K562 (cell line): ENCODE measurements at regions of chr6 and their contacts with region 1.

Region 1: GRCh38 chr6:35468181-35468979 is at the start of gene RPL10A:
- DNase-seq: peak; percentile 94 to 99 (median 96)
- ATAC-seq: peak; percentile 88
- H3K4me3 ChIP-seq: peak within 1 kb of the TSS; percentile 91
- H3K27ac ChIP-seq: peak within 1 kb of the TSS; percentile 93
- H3K4me1 ChIP-seq: peaks cover 23 to 24% of the 10 kb centered on the region in 2 experiments; a peak in 4 of 5 replicates
- H3K27me3 ChIP-seq: no peaks in the 10 kb centered on the region; a peak in 1 of 5 replicates
- CTCF ChIP-seq: peak; percentile 97 to 99 (median 99)
- EP300 ChIP-seq: 0 out of 2 replicates have a peak, but pooled peaks have one; percentile 12
- POLR2A ChIP-seq: peak; percentile 100
- RAD21 ChIP-seq: peak; percentile 91 to 93
- polyA plus RNA-seq, gene RPL10A: 1,589 to 2,116 TPM

Region 2: DNA sequence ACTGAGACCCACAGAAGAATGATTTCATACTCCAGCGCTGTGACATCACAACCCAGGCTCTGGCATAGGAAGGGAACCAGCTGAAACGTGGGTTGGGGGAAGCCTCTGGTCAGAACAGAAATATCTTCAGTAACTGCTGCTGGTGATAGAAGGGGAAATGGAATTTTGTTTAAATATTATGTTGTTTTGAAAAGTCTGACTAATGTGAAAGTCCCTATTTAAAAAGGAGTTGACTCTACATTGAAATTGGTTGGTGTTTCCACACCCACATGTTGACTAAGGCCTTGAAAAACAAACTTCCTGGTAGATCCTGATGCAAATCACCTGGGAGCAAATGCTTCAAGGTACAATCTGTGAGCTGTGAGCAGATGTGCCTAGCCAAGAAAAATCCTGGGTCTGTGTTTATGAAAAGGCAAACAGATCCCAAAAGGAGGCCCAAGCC is 302.7 kb before region 1 on chr6:
- CTCF ChIA-PET with region 1: no interaction called
- POLR2A ChIA-PET with region 1: no interaction called
- in situ Hi-C with region 1: no loop called
- intact Hi-C with region 1: no loop called
- DNase-seq: no peak
- ATAC-seq: no peak
- H3K4me3 ChIP-seq: no peak overlapping the region
- H3K27ac ChIP-seq: no peak overlapping the region
- H3K4me1 ChIP-seq: no peaks in the 10 kb centered on the region
- H3K27me3 ChIP-seq: peaks cover 25 to 45% of the 10 kb centered on the region in 2 experiments; a peak in 4 of 5 replicates
- CTCF ChIP-seq: no peak
- EP300 ChIP-seq: no peak
- POLR2A ChIP-seq: no peak
- RAD21 ChIP-seq: no peak

Region 3: DNA sequence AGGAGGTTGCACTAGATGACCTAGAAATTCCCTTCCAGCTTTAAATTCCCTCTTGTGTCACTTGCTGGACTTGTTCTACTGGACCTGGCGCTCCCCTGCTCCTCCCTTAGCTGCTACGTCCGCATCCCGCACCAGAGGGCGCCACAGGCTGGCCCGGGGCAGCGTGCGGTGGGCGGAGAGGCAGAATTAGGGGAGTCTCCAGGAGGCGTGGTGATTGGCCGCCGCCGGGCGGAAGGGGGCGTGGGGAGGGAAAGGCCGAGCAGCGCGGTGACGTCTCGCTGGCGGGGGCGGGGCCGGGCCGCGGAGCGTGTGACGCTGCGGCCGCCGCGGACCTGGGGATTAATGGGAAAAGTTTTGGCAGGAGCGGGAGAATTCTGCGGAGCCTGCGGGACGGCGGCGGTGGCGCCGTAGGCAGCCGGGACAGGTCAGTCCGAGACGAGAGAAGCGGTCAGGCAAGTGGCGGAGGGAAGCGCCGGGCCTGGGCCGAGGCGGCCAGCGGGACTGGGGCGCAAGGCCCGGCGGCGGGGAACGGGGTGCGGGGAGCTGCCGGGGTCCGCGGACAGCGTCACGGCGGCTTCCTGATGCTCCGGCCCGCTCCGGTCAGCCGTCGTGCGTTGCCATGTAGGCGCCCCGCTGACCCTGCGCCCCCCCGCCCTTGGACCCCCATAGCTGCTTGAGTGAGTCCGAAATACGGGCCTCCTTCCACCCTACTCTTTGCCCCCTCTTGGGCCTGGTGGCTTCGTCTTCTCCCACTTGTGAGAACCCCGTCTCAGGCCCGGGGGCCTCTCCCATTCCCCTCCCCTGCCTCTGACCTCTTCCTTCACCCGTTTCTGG is 125.9 kb before region 1 on chr6 and contains the start of gene PPARD:
- CTCF ChIA-PET with region 1: interaction called, 17 read pairs
- POLR2A ChIA-PET with region 1: interaction called, 9 read pairs
- in situ Hi-C with region 1: loop called (anchors 5 kb)
- intact Hi-C with region 1: loop called (anchors 1 kb)
- DNase-seq: peak; percentile 99 to 100 (median 100)
- ATAC-seq: peak; percentile 97
- H3K4me3 ChIP-seq: peak within 1 kb of the TSS; percentile 73
- H3K27ac ChIP-seq: peak within 1 kb of the TSS; percentile 72
- H3K4me1 ChIP-seq: peaks cover 26 to 28% of the 10 kb centered on the region in 2 experiments; a peak in 4 of 5 replicates
- H3K27me3 ChIP-seq: peaks cover 0 to 6% of the 10 kb centered on the region in 2 experiments; a peak in 2 of 5 replicates
- CTCF ChIP-seq: peak; percentile 98 to 99 (median 99)
- EP300 ChIP-seq: peak; percentile 16; the same call in 1 of the 2 replicates
- POLR2A ChIP-seq: peak; percentile 65; the same call in 1 of the 2 replicates
- RAD21 ChIP-seq: peak; percentile 100
- polyA plus RNA-seq, gene PPARD: 0.14 to 0.18 TPM

Region 4: DNA sequence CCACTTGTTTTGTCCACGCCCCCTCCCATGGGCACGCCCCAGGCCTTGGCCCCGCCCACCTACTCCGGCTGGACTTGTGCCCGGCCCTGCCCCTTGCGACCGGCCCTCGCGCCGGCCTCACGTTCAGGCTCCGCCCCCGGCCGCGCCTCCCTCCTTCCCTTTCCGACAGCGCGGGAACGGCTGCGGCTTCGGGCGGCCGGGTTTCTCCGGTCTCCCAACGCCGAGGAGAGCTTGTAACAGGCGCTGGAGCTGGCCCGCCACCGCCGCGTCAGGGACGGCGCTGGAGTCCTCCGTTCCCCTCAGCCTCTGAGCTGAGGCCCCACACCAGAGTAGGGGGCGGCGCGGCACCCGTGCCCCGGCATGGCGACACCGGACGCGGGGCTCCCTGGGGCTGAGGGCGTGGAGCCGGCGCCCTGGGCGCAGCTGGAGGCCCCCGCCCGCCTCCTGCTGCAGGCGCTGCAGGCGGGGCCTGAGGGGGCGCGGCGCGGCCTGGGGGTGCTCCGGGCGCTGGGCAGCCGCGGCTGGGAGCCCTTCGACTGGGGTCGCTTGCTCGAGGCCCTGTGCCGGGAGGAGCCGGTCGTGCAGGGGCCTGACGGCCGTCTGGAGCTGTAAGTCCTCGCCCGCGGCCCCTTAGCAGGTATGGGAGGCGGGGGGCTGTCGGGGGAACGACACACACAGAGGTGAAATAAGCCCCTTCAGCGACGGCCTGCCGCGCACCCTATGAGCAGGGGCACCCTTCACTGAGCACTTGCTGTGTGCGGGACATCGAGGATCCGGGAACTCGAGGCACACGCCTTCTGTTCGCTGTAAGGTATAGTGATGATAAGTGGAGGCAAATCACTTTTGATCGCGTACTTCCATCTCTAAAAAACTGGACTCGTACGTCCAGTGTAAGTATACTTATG is 15.9 kb before region 1 on chr6 and contains the start of gene FANCE:
- CTCF ChIA-PET with region 1: no interaction called
- POLR2A ChIA-PET with region 1: interaction called, 31 read pairs
- in situ Hi-C with region 1: no loop called
- intact Hi-C with region 1: loop called (anchors 1 kb)
- DNase-seq: peak; percentile 98 to 99 (median 99)
- ATAC-seq: peak; percentile 94
- H3K4me3 ChIP-seq: peak within 1 kb of the TSS; percentile 73
- H3K27ac ChIP-seq: peak within 1 kb of the TSS; percentile 78
- H3K4me1 ChIP-seq: peaks cover 18 to 27% of the 10 kb centered on the region in 2 experiments
- H3K27me3 ChIP-seq: peaks cover 1 to 5% of the 10 kb centered on the region in 2 experiments; a peak in 1 of 5 replicates
- CTCF ChIP-seq: no peak; a peak in 1 of 6 replicates
- EP300 ChIP-seq: no peak
- POLR2A ChIP-seq: peak; percentile 92
- RAD21 ChIP-seq: no peak
- polyA plus RNA-seq, gene FANCE: 5.7 to 5.9 TPM

Region 5: GRCh38 chr6:35489995-35490733 is 21.8 kb after region 1 on chr6:
- CTCF ChIA-PET with region 1: no interaction called
- POLR2A ChIA-PET with region 1: interaction called, 167 read pairs
- in situ Hi-C with region 1: no loop called
- intact Hi-C with region 1: no loop called
- DNase-seq: peak; percentile 83 to 90 (median 87)
- ATAC-seq: peak; percentile 86
- H3K4me3 ChIP-seq: no peak overlapping the region
- H3K27ac ChIP-seq: peak overlapping the region; percentile 67
- H3K4me1 ChIP-seq: peaks cover 53 to 72% of the 10 kb centered on the region in 2 experiments
- H3K27me3 ChIP-seq: no peaks in the 10 kb centered on the region
- CTCF ChIP-seq: no peak
- EP300 ChIP-seq: 0 out of 2 replicates have a peak, but pooled peaks have one; percentile 13
- POLR2A ChIP-seq: no peak
- RAD21 ChIP-seq: no peak

Region 6: GRCh38 chr6:35496841-35497570 is 28.6 kb after region 1 on chr6 and contains the start of gene TEAD3:
- CTCF ChIA-PET with region 1: no interaction called
- POLR2A ChIA-PET with region 1: interaction called, 52 read pairs
- in situ Hi-C with region 1: no loop called
- intact Hi-C with region 1: no loop called
- DNase-seq: peak; percentile 82 to 98 (median 98)
- ATAC-seq: peak; percentile 66
- H3K4me3 ChIP-seq: peak within 1 kb of the TSS; percentile 69
- H3K27ac ChIP-seq: peak within 1 kb of the TSS; percentile 95
- H3K4me1 ChIP-seq: peaks cover 34 to 53% of the 10 kb centered on the region in 2 experiments
- H3K27me3 ChIP-seq: no peaks in the 10 kb centered on the region
- CTCF ChIP-seq: peak in 2 of 3 experiments; percentile 30 to 49; a peak in 3 of 6 replicates
- EP300 ChIP-seq: no peak
- POLR2A ChIP-seq: no peak
- RAD21 ChIP-seq: no peak
- polyA plus RNA-seq, gene TEAD3: 0.63 to 0.92 TPM

Region 7: DNA sequence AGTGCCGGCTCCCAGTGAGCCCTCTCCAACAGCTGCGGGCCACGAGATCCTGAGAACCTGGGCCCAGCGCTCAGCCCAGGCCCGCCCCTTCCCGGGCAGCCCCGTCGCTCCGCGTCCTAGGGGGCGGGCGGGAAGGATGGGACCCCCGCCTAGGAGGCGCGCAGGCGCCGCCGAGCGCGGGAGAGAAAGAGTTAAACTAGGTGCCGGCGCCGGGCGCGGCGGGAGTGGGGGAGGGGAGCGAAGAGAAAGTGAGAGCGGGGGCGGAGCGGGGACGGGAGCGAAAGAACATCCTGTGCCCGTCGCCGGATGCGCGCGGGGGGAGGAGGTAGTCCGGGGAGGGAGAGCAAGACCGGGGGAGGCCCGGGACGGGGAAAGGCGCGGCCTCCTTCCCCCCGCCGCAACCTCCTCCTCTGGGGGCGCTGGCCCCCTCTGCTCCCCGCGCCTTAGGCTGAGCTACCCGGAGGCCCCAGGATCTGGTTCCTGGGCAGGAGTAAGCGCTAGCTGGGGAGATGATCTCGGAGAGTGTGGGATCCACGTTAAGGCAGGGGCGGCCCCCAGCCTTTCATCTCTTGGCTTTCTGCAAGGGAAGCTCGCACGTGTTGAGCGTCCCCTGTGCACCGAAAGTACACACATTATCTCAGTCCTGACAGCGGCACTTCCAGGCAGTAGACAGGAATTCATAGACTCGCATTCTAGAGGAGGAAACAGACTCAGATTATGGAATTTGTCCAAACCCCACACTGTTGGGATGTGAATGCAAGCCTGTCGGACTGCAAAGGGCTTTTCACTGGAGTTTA is 263.6 kb after region 1 on chr6:
- CTCF ChIA-PET with region 1: no interaction called
- POLR2A ChIA-PET with region 1: interaction called, 10 read pairs
- in situ Hi-C with region 1: no loop called
- intact Hi-C with region 1: no loop called
- DNase-seq: peak; percentile 97 to 98 (median 98)
- ATAC-seq: peak; percentile 75
- H3K4me3 ChIP-seq: peak overlapping the region; percentile 77
- H3K27ac ChIP-seq: peak overlapping the region; percentile 85
- H3K4me1 ChIP-seq: peaks cover 46 to 63% of the 10 kb centered on the region in 2 experiments
- H3K27me3 ChIP-seq: no peaks in the 10 kb centered on the region
- CTCF ChIP-seq: peak; percentile 30 to 50 (median 42)
- EP300 ChIP-seq: peak; percentile 65; the same call in 1 of the 2 replicates
- POLR2A ChIP-seq: peak; percentile 89
- RAD21 ChIP-seq: peak; percentile 12 to 30; a peak in 1 of 4 replicates